Ovary (tissue), 10 donors: ENCODE measurements at regions of chr20 and their contacts with region 1.

Region 1: GRCh38 chr20:3888622-3889488 is at the start of gene PANK2:
- DNase-seq: peak; percentile 99 to 100 (median 99)
- H3K4me3 ChIP-seq: peak within 1 kb of the TSS; percentile 93
- H3K27ac ChIP-seq: peak within 1 kb of the TSS; percentile 86 to 92
- H3K4me1 ChIP-seq: peaks cover 13% of the 10 kb centered on the region
- H3K27me3 ChIP-seq: no peaks in the 10 kb centered on the region
- CTCF ChIP-seq: peak; percentile 23 to 54 (median 44)
- EP300 ChIP-seq: no peak
- POLR2A ChIP-seq: peak; percentile 95
- total RNA-seq, gene PANK2: 22.2 to 34.9 (median 33.9) TPM

Region 2: DNA sequence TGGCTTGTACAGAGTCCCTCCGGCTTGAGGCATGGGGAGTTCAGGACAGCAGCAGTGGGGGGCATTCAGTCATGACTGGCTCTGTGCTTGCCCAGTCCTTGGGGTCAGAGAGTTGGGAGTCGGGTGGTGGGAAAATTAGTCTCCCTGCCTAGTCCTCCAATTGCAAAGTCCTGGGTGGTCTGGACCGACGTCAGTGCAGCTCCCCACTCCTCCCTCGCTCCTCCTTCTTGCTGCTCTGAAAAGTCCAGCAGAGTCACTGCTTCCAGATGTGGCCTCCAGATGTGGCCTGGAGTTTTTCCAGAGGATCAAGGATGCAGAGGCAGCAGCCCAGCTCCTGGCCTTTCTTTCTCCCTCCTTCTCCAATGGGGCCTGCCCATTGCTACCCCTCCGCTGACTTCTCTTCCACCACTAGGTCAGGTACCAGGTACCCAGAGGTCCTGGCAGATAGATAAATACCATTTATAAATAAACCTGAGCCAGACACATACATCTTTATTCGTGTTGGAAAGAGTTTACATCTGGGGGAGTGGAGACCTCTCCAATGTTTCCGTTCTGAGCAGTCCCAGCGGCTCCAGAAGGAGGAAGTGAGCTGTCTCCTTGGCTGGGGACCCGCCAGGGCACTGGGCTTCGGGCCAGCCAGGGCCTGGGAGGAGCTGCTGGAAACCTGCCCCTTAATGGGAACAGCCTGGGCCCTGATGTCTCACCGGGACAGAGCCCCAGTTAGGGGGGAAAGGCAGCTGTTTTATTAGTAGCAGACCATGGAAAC is 175.5 kb after region 1 on chr20:
- intact Hi-C with region 1: loop called in 1 of 4 experiments (anchors 10 kb)
- DNase-seq: peak; percentile 91 to 96 (median 94)
- H3K4me3 ChIP-seq: no peak overlapping the region
- H3K27ac ChIP-seq: peak overlapping the region; percentile 7 to 63
- H3K4me1 ChIP-seq: peaks cover 2% of the 10 kb centered on the region
- H3K27me3 ChIP-seq: no peaks in the 10 kb centered on the region
- CTCF ChIP-seq: no peak
- EP300 ChIP-seq: no peak
- POLR2A ChIP-seq: no peak

Region 3: GRCh38 chr20:4082406-4083097 is 193.7 kb after region 1 on chr20:
- intact Hi-C with region 1: loop called in 2 of 4 experiments (anchors 2 to 10 kb)
- DNase-seq: peak in 1 of 5 donors; percentile 50
- H3K4me3 ChIP-seq: no peak overlapping the region
- H3K27ac ChIP-seq: no peak overlapping the region
- H3K4me1 ChIP-seq: peaks cover 6% of the 10 kb centered on the region
- H3K27me3 ChIP-seq: no peaks in the 10 kb centered on the region
- CTCF ChIP-seq: no peak
- EP300 ChIP-seq: no peak
- POLR2A ChIP-seq: no peak

Region 4: GRCh38 chr20:4344670-4345069 is 455.8 kb after region 1 on chr20:
- intact Hi-C with region 1: no loop called
- DNase-seq: no peak
- H3K4me3 ChIP-seq: no peak overlapping the region
- H3K27ac ChIP-seq: no peak overlapping the region
- H3K4me1 ChIP-seq: no peaks in the 10 kb centered on the region
- H3K27me3 ChIP-seq: no peaks in the 10 kb centered on the region
- CTCF ChIP-seq: no peak
- EP300 ChIP-seq: no peak
- POLR2A ChIP-seq: no peak

Region 5: DNA sequence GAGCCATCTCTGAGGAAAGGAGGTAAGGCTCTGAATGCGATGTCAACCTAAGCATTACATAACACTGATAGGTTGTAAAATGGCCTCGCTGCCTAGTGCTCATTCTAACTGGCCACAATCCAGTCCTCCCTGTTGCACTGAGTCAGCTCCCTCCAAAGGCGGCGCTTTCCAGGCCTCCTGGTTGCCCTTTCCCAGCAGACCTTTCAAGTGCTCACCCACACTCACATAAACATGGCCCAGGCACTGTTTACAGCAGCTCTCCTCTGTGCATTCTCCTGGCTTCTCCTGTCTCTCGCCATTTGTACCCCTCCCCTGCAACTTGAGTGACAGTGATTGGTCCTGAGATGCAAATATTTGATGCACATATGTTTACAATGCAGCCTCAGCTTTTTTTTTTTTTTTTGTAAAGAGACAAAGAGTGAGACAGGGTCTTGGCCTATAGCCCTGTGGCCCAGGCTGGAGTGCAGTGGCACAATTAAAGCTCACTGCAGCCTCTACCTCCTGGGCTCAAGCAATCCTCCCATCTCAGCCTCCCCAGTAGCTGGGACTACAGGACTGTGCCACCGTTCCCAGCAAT is 796.1 kb after region 1 on chr20:
- intact Hi-C with region 1: no loop called
- DNase-seq: peak in 4 of 5 donors; percentile 22 to 33 (median 26)
- H3K4me3 ChIP-seq: no peak overlapping the region
- H3K27ac ChIP-seq: peak overlapping the region in 1 of 2 donors; percentile 100
- H3K4me1 ChIP-seq: peaks cover 2% of the 10 kb centered on the region
- H3K27me3 ChIP-seq: no peaks in the 10 kb centered on the region
- CTCF ChIP-seq: no peak
- EP300 ChIP-seq: no peak
- POLR2A ChIP-seq: no peak